Activated T-helper 2 cell treated with anti-CD3 and anti-CD28 coated beads, Interferon-gamma antibody, Interleukin-2, Interleukin-4, amounts not matched to agents 10 μg/mL and 5 μg/mL and 100 μg/mL, durations not matched to agents 14 hours and 24 hours and 36 hours (primary cell): ENCODE measurements at regions of chr7 and their contacts with region 1.

Region 1: GRCh38 chr7:96837593-96837992 is 127.9 kb upstream of the SEM1 start:
- DNase-seq: peak; percentile 24
- H3K4me3 Mint-ChIP-seq: peak overlapping the region; percentile 47
- H3K27ac Mint-ChIP-seq: peak overlapping the region; percentile 56
- H3K4me1 Mint-ChIP-seq: peaks cover 27% of the 10 kb centered on the region
- H3K27me3 Mint-ChIP-seq: peaks cover 58% of the 10 kb centered on the region

Region 2: GRCh38 chr7:96303686-96304443 is 533.7 kb before region 1 on chr7:
- intact Hi-C with region 1: loop called (anchors 5 kb)
- DNase-seq: no peak
- H3K4me3 Mint-ChIP-seq: peak overlapping the region; percentile 37
- H3K27ac Mint-ChIP-seq: peak overlapping the region; percentile 92
- H3K4me1 Mint-ChIP-seq: peaks cover 66% of the 10 kb centered on the region
- H3K27me3 Mint-ChIP-seq: no peaks in the 10 kb centered on the region

Region 3: GRCh38 chr7:96479015-96479645 is 358.5 kb before region 1 on chr7:
- intact Hi-C with region 1: loop called (anchors 5 kb)
- DNase-seq: no peak
- H3K4me3 Mint-ChIP-seq: peak overlapping the region; percentile 27
- H3K27ac Mint-ChIP-seq: peak overlapping the region; percentile 81
- H3K4me1 Mint-ChIP-seq: peaks cover 23% of the 10 kb centered on the region
- H3K27me3 Mint-ChIP-seq: peaks cover 7% of the 10 kb centered on the region

Region 4: GRCh38 chr7:96495751-96496216 is 341.8 kb before region 1 on chr7:
- intact Hi-C with region 1: loop called (anchors 1 kb)
- DNase-seq: peak; percentile 20
- H3K4me3 Mint-ChIP-seq: peak overlapping the region; percentile 62
- H3K27ac Mint-ChIP-seq: peak overlapping the region; percentile 92
- H3K4me1 Mint-ChIP-seq: peaks cover 27% of the 10 kb centered on the region
- H3K27me3 Mint-ChIP-seq: peaks cover 9% of the 10 kb centered on the region

Region 5: GRCh38 chr7:96709381-96710228 is 128.0 kb before region 1 on chr7 and contains the start of gene SEM1:
- intact Hi-C with region 1: loop called (anchors 5 kb)
- DNase-seq: peak; percentile 57
- H3K4me3 Mint-ChIP-seq: peak within 1 kb of the TSS; percentile 98
- H3K27ac Mint-ChIP-seq: peak within 1 kb of the TSS; percentile 95
- H3K4me1 Mint-ChIP-seq: peaks cover 15% of the 10 kb centered on the region
- H3K27me3 Mint-ChIP-seq: no peaks in the 10 kb centered on the region
- total RNA-seq, gene SEM1: 39.0 and 51.9 TPM in 2 replicates

Region 6: DNA sequence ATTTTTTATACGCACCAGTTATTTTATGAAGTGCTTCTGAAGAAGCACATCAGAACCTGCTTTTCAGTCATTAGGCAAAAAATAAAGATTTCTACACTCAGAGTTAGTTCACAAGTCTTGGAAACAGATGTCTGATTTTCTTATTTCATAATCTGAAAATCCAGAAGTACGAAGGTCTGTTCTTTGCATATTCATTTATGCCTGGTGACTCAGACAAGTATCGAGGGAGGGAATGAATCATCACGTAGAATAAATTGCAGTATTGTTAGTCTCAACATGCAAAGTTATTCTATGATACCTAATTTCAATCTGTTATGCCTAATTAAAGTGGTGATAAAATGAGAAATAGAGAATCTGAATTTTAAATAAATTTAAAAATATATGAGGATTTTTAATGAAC is 14.3 kb before region 1 on chr7:
- intact Hi-C with region 1: loop called (anchors 2 kb)
- DNase-seq: no peak
- H3K4me3 Mint-ChIP-seq: no peak overlapping the region
- H3K27ac Mint-ChIP-seq: no peak overlapping the region
- H3K4me1 Mint-ChIP-seq: peaks cover 5% of the 10 kb centered on the region
- H3K27me3 Mint-ChIP-seq: peaks cover 39% of the 10 kb centered on the region

Region 7: GRCh38 chr7:96855139-96855538 is 17.5 kb after region 1 on chr7:
- intact Hi-C with region 1: no loop called
- DNase-seq: no peak
- H3K4me3 Mint-ChIP-seq: no peak overlapping the region
- H3K27ac Mint-ChIP-seq: no peak overlapping the region
- H3K4me1 Mint-ChIP-seq: no peaks in the 10 kb centered on the region
- H3K27me3 Mint-ChIP-seq: peaks cover 26% of the 10 kb centered on the region

Region 8: GRCh38 chr7:96921271-96921670 is 83.7 kb after region 1 on chr7:
- intact Hi-C with region 1: no loop called
- DNase-seq: no peak
- H3K4me3 Mint-ChIP-seq: no peak overlapping the region
- H3K27ac Mint-ChIP-seq: no peak overlapping the region
- H3K4me1 Mint-ChIP-seq: no peaks in the 10 kb centered on the region
- H3K27me3 Mint-ChIP-seq: peaks cover 7% of the 10 kb centered on the region